ENCODE measurements at regions of chr6 and their contacts with region 1.

Region 1: DNA sequence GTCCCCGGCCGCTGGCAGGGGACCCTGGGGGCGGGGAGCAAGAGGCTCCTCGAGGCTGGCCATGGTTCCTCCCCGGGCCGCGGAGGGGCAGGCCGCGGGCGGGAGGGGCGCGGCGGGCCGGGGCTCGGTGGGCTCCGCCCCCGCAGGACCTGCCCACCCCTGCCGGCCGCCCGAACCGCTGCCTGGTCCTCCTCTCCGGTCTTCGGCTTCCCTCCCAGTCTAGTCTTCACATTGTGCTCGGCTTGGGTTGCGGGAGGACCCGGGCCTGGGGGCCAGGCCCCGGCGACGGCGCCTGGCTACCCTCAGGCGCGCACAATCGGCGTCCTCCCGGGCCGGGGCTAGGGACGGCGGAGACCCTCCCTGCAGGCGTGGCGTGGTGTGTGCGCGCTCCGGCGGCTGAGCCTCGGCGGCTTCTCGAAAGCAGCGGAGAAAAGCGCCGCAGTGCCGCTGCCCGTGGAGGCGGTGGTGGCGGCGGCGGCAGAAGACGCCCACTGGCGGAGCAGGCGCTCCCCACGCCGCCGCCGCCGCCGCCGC is at the start of gene PDE10A:
- DNase-seq: no peak
- ATAC-seq: no peak
- H3K4me3 ChIP-seq: no peak within 1 kb of the TSS
- H3K4me3 Mint-ChIP-seq: peak within 1 kb of the TSS in 4 of 10 donors; percentile 29 to 59 (median 42)
- H3K27ac ChIP-seq: no peak within 1 kb of the TSS
- H3K27ac Mint-ChIP-seq: peak within 1 kb of the TSS in 1 of 9 donors; percentile 60
- H3K4me1 ChIP-seq: no peaks in the 10 kb centered on the region
- H3K4me1 Mint-ChIP-seq: peaks cover 0 to 10% (median 3%) of the 10 kb centered on the region in 7 donors
- H3K27me3 ChIP-seq: no peaks in the 10 kb centered on the region
- H3K27me3 Mint-ChIP-seq: peaks cover 51 to 69% (median 54%) of the 10 kb centered on the region in 5 donors
- total RNA-seq, gene PDE10A: not detected

Region 2: GRCh38 chr6:165340532-165340931 is 322.3 kb before region 1 on chr6:
- CTCF ChIA-PET with region 1: no interaction called
- POLR2A ChIA-PET with region 1: no interaction called
- intact Hi-C with region 1: no loop called
- DNase-seq: no peak
- ATAC-seq: no peak
- H3K4me3 ChIP-seq: no peak overlapping the region
- H3K4me3 Mint-ChIP-seq: no peak overlapping the region
- H3K27ac ChIP-seq: no peak overlapping the region
- H3K27ac Mint-ChIP-seq: no peak overlapping the region
- H3K4me1 ChIP-seq: no peaks in the 10 kb centered on the region
- H3K4me1 Mint-ChIP-seq: no peaks in the 10 kb centered on the region
- H3K27me3 ChIP-seq: no peaks in the 10 kb centered on the region
- H3K27me3 Mint-ChIP-seq: no peaks in the 10 kb centered on the region

Region 3: GRCh38 chr6:165649166-165650137 is 13.4 kb before region 1 on chr6:
- CTCF ChIA-PET with region 1: no interaction called
- POLR2A ChIA-PET with region 1: no interaction called
- intact Hi-C with region 1: loop called in 1 of 2 experiments (anchors 1 kb)
- DNase-seq: no peak
- ATAC-seq: no peak
- H3K4me3 ChIP-seq: no peak overlapping the region
- H3K4me3 Mint-ChIP-seq: no peak overlapping the region
- H3K27ac ChIP-seq: no peak overlapping the region
- H3K27ac Mint-ChIP-seq: no peak overlapping the region
- H3K4me1 ChIP-seq: no peaks in the 10 kb centered on the region
- H3K4me1 Mint-ChIP-seq: no peaks in the 10 kb centered on the region
- H3K27me3 ChIP-seq: no peaks in the 10 kb centered on the region
- H3K27me3 Mint-ChIP-seq: peaks cover 0 to 5% (median 0%) of the 10 kb centered on the region in 5 donors

Region 4: GRCh38 chr6:165676435-165677068 is 13.7 kb after region 1 on chr6:
- CTCF ChIA-PET with region 1: no interaction called
- POLR2A ChIA-PET with region 1: no interaction called
- intact Hi-C with region 1: no loop called
- DNase-seq: no peak
- ATAC-seq: no peak
- H3K4me3 ChIP-seq: no peak overlapping the region
- H3K4me3 Mint-ChIP-seq: no peak overlapping the region
- H3K27ac ChIP-seq: no peak overlapping the region
- H3K27ac Mint-ChIP-seq: no peak overlapping the region
- H3K4me1 ChIP-seq: no peaks in the 10 kb centered on the region
- H3K4me1 Mint-ChIP-seq: no peaks in the 10 kb centered on the region
- H3K27me3 ChIP-seq: no peaks in the 10 kb centered on the region
- H3K27me3 Mint-ChIP-seq: peaks cover 0 to 12% (median 0%) of the 10 kb centered on the region in 5 donors

Region 5: GRCh38 chr6:165774903-165775601 is 112.2 kb after region 1 on chr6:
- CTCF ChIA-PET with region 1: no interaction called
- POLR2A ChIA-PET with region 1: no interaction called
- intact Hi-C with region 1: no loop called
- DNase-seq: no peak
- ATAC-seq: no peak
- H3K4me3 ChIP-seq: no peak overlapping the region
- H3K4me3 Mint-ChIP-seq: no peak overlapping the region
- H3K27ac ChIP-seq: no peak overlapping the region
- H3K27ac Mint-ChIP-seq: no peak overlapping the region
- H3K4me1 ChIP-seq: no peaks in the 10 kb centered on the region
- H3K4me1 Mint-ChIP-seq: no peaks in the 10 kb centered on the region
- H3K27me3 ChIP-seq: no peaks in the 10 kb centered on the region
- H3K27me3 Mint-ChIP-seq: peaks cover 20 to 54% (median 47%) of the 10 kb centered on the region in 5 donors

Region 6: DNA sequence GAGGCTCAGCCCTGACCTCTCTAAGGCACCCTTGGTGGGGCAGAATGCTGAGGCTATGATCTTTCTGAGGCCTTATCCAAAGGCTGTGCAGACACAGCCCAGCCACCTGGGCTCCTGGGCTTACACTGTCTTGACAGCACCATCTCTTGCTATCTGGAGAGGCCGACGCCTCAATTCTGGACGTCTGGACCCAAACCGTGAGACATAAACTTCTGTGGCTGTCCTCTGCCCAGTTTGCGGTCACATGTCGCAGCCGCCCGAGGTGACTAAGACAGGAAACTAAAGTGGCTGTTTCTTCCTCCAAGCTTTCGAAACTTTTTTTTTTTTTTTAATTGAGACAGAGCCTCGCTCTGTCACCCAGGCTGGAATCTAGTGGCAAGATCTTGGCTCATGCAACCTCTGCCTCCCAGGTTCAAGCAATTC is 596.0 kb after region 1 on chr6:
- CTCF ChIA-PET with region 1: no interaction called
- POLR2A ChIA-PET with region 1: no interaction called
- intact Hi-C with region 1: no loop called
- DNase-seq: peak in 2 of 9 donors; percentile 20 to 21
- ATAC-seq: peak; percentile 84
- H3K4me3 ChIP-seq: no peak overlapping the region
- H3K4me3 Mint-ChIP-seq: peak overlapping the region in 9 of 10 donors; percentile 36 to 78 (median 75)
- H3K27ac ChIP-seq: no peak overlapping the region
- H3K27ac Mint-ChIP-seq: peak overlapping the region in 8 of 9 donors; percentile 75 to 99 (median 92)
- H3K4me1 ChIP-seq: peaks cover 8 to 22% of the 10 kb centered on the region in 2 donors
- H3K4me1 Mint-ChIP-seq: peaks cover 0 to 66% (median 42%) of the 10 kb centered on the region in 7 donors
- H3K27me3 ChIP-seq: no peaks in the 10 kb centered on the region
- H3K27me3 Mint-ChIP-seq: peaks cover 0 to 54% (median 34%) of the 10 kb centered on the region in 5 donors